ENCODE measurements at regions of chr21 and their contacts with region 1.

Region 1: GRCh38 chr21:44583089-44583799 is 2.8 kb upstream of the KRTAP10-5 start:
- DNase-seq: no peak
- H3K4me3 Mint-ChIP-seq: no peak overlapping the region
- H3K27ac Mint-ChIP-seq: no peak overlapping the region
- H3K4me1 Mint-ChIP-seq: peaks cover 15% of the 10 kb centered on the region
- H3K27me3 Mint-ChIP-seq: peaks cover 13% of the 10 kb centered on the region

Region 2: GRCh38 chr21:44657635-44658540 is 74.6 kb after region 1 on chr21 and contains the start of gene KRTAP12-3:
- CTCF ChIA-PET with region 1: no interaction called
- POLR2A ChIA-PET with region 1: no interaction called
- intact Hi-C with region 1: loop called (anchors 10 kb)
- DNase-seq: peak; percentile 56
- H3K4me3 Mint-ChIP-seq: peak within 1 kb of the TSS; percentile 67
- H3K27ac Mint-ChIP-seq: peak within 1 kb of the TSS; percentile 89
- H3K4me1 Mint-ChIP-seq: peaks cover 51% of the 10 kb centered on the region
- H3K27me3 Mint-ChIP-seq: no peaks in the 10 kb centered on the region
- total RNA-seq, gene KRTAP12-3: not detected

Region 3: DNA sequence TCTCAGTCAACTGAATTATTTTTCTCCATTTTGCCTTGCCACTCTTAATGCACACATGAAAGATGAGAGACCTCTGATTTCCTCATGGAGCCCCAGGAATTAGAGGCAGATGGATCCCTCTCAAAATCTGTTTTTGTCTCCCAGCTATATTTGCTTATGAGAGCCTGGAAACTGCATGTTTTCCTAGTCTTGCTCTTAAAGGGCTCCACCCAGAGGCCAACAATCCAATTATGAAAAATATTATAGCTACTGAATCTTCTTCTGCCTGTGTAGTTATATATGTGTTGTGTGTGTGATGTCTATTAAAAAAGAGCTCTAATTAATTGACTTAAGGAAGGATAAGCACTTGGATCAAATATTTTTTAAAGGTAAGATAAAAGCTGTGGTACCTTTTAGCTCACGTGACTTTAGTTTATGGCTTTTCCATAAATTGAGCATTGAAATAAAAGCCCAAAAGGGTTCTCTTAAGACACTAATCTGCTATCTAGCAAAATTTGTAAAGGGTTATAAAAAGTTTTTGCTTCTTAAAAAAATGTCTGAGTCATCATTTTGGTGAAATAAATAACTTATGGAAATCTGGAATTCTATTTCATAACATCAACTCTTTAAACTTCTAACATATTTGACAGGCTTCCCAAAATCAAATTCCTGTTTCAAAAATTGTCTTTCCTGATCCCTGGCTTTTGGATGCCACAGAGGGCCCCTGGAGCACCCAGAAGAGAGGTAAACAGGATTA is 159.3 kb after region 1 on chr21:
- CTCF ChIA-PET with region 1: no interaction called
- POLR2A ChIA-PET with region 1: no interaction called
- intact Hi-C with region 1: no loop called
- DNase-seq: no peak
- H3K4me3 Mint-ChIP-seq: no peak overlapping the region
- H3K27ac Mint-ChIP-seq: no peak overlapping the region
- H3K4me1 Mint-ChIP-seq: peaks cover 5% of the 10 kb centered on the region
- H3K27me3 Mint-ChIP-seq: peaks cover 3% of the 10 kb centered on the region